Natural killer cell (primary cell): ENCODE measurements at regions of chr13 and their contacts with region 1.

Region 1: GRCh38 chr13:76473552-76474134 is 412.6 kb downstream of the KCTD12 start:
- DNase-seq: peak; percentile 34 to 85
- ATAC-seq: peak; percentile 81 to 91 (median 84)
- H3K4me3 ChIP-seq: no peak overlapping the region
- H3K4me3 Mint-ChIP-seq: no peak overlapping the region
- H3K27ac ChIP-seq: no peak overlapping the region
- H3K27ac Mint-ChIP-seq: no peak overlapping the region
- H3K4me1 ChIP-seq: no peaks in the 10 kb centered on the region
- H3K4me1 Mint-ChIP-seq: no peaks in the 10 kb centered on the region
- H3K27me3 ChIP-seq: no peaks in the 10 kb centered on the region
- H3K27me3 Mint-ChIP-seq: no peaks in the 10 kb centered on the region
- CTCF ChIP-seq: peak; percentile 79

Region 2: GRCh38 chr13:75876360-75877050 is 597.1 kb before region 1 on chr13:
- intact Hi-C with region 1: loop called (anchors 1 kb)
- DNase-seq: peak in 1 of 2 donors; percentile 76
- ATAC-seq: peak; percentile 72 to 91 (median 87)
- H3K4me3 ChIP-seq: no peak overlapping the region
- H3K4me3 Mint-ChIP-seq: no peak overlapping the region
- H3K27ac ChIP-seq: no peak overlapping the region
- H3K27ac Mint-ChIP-seq: no peak overlapping the region
- H3K4me1 ChIP-seq: no peaks in the 10 kb centered on the region
- H3K4me1 Mint-ChIP-seq: peaks cover 0 to 5% of the 10 kb centered on the region in 2 donors
- H3K27me3 ChIP-seq: no peaks in the 10 kb centered on the region
- H3K27me3 Mint-ChIP-seq: peaks cover 6 to 32% of the 10 kb centered on the region in 2 donors
- CTCF ChIP-seq: peak; percentile 87

Region 3: DNA sequence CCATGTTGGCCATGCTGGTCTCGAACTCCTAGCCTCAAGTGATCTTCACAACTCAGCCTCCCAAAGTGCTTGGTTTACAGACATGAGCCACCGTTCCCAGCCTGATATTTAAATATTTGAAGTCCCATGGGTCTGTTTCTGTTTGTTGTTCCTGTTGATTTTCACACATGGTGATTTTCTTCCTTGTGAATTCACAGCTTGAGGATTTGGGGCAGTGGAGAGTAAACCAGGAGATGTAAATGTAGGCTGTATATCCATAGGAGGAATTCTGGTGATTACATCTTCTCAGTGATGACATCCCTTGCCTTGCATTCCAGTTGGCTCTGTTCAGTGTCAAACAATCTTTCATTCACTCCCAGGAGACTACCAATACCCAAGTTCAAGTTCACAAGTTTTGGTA is 59.3 kb before region 1 on chr13:
- intact Hi-C with region 1: no loop called
- DNase-seq: no peak
- ATAC-seq: no peak
- H3K4me3 ChIP-seq: no peak overlapping the region
- H3K4me3 Mint-ChIP-seq: no peak overlapping the region
- H3K27ac ChIP-seq: no peak overlapping the region
- H3K27ac Mint-ChIP-seq: no peak overlapping the region
- H3K4me1 ChIP-seq: no peaks in the 10 kb centered on the region
- H3K4me1 Mint-ChIP-seq: no peaks in the 10 kb centered on the region
- H3K27me3 ChIP-seq: no peaks in the 10 kb centered on the region
- H3K27me3 Mint-ChIP-seq: no peaks in the 10 kb centered on the region
- CTCF ChIP-seq: no peak

Region 4: GRCh38 chr13:76647550-76647949 is 173.9 kb after region 1 on chr13:
- intact Hi-C with region 1: no loop called
- DNase-seq: no peak
- ATAC-seq: no peak
- H3K4me3 ChIP-seq: no peak overlapping the region
- H3K4me3 Mint-ChIP-seq: no peak overlapping the region
- H3K27ac ChIP-seq: no peak overlapping the region
- H3K27ac Mint-ChIP-seq: no peak overlapping the region
- H3K4me1 ChIP-seq: no peaks in the 10 kb centered on the region
- H3K4me1 Mint-ChIP-seq: no peaks in the 10 kb centered on the region
- H3K27me3 ChIP-seq: no peaks in the 10 kb centered on the region
- H3K27me3 Mint-ChIP-seq: peaks cover 0 to 2% of the 10 kb centered on the region in 2 donors
- CTCF ChIP-seq: no peak